ENCODE measurements at regions of chr20 and their contacts with region 1.

Region 1: GRCh38 chr20:49915378-49916145 is at the start of gene SPATA2:
- DNase-seq: peak; percentile 92
- ATAC-seq: peak; percentile 79
- H3K4me3 Mint-ChIP-seq: peak within 1 kb of the TSS; percentile 91
- H3K27ac Mint-ChIP-seq: peak within 1 kb of the TSS; percentile 100
- H3K4me1 Mint-ChIP-seq: peaks cover 23% of the 10 kb centered on the region
- H3K27me3 Mint-ChIP-seq: no peaks in the 10 kb centered on the region
- total RNA-seq, gene SPATA2: 8.9 to 9.1 TPM

Region 2: GRCh38 chr20:49936153-49937027 is 20.8 kb after region 1 on chr20 and contains the start of gene RNF114:
- POLR2A ChIA-PET with region 1: interaction called, 32 read pairs
- DNase-seq: peak; percentile 93
- ATAC-seq: peak; percentile 83
- H3K4me3 Mint-ChIP-seq: peak within 1 kb of the TSS; percentile 95
- H3K27ac Mint-ChIP-seq: peak within 1 kb of the TSS; percentile 94
- H3K4me1 Mint-ChIP-seq: peaks cover 26% of the 10 kb centered on the region
- H3K27me3 Mint-ChIP-seq: no peaks in the 10 kb centered on the region
- total RNA-seq, gene RNF114: 75.8 TPM